ENCODE measurements at regions of chr3 and their contacts with region 1.

Region 1: GRCh38 chr3:32684800-32685542 is at the start of gene CNOT10:
- DNase-seq: peak; percentile 98
- H3K4me3 Mint-ChIP-seq: peak within 1 kb of the TSS; percentile 91
- H3K27ac Mint-ChIP-seq: peak within 1 kb of the TSS; percentile 91
- H3K4me1 Mint-ChIP-seq: peaks cover 33% of the 10 kb centered on the region
- H3K27me3 Mint-ChIP-seq: no peaks in the 10 kb centered on the region
- total RNA-seq, gene CNOT10: 52.4 to 54.7 TPM

Region 2: DNA sequence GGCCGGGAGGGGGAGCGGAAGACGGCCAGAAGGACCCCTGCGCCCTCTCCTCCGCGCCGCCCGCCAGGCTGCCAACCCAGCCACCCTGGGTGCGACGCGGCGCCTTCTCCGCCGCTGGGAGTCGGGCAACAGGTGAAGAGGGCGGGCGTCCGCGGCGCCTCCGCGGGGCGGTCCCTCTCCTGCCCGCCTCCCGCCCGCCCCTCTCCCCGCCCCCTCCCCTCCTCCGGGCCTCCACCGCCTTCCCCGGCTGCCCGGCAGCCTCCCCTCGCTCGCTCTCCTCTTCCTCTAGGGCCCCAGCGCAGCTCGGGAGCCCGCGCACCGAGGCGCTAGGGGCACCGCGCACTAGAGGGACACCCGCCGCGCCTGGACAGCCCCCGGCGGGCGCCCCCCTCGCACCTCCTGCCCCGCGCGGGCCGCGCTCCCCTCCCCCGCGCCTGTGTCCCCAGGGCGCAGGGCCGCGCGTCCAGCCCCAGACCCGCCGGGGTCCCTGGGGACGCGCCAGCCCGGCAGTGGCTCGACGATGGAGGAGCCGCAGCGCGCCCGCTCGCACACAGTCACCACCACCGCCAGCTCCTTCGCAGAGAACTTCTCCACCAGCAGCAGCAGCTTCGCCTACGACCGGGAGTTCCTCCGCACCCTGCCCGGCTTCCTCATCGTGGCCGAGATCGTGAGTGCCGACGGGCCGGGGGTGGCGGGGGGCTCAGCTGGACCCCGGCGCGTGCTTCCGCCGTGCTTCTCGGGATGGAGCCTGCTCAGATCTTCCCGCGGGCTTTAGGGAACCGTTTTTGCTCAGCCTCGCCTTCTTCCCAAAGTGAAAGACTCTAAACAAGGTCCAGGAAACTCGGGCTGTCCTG is 446.3 kb before region 1 on chr3 and contains the start of gene CMTM8:
- CTCF ChIA-PET with region 1: no interaction called
- POLR2A ChIA-PET with region 1: no interaction called
- intact Hi-C with region 1: loop called (anchors 10 kb)
- DNase-seq: peak; percentile 75
- H3K4me3 Mint-ChIP-seq: peak within 1 kb of the TSS; percentile 81
- H3K27ac Mint-ChIP-seq: peak within 1 kb of the TSS; percentile 34
- H3K4me1 Mint-ChIP-seq: peaks cover 31% of the 10 kb centered on the region
- H3K27me3 Mint-ChIP-seq: peaks cover 4% of the 10 kb centered on the region
- total RNA-seq, gene CMTM8: 11.6 to 13.0 TPM

Region 3: DNA sequence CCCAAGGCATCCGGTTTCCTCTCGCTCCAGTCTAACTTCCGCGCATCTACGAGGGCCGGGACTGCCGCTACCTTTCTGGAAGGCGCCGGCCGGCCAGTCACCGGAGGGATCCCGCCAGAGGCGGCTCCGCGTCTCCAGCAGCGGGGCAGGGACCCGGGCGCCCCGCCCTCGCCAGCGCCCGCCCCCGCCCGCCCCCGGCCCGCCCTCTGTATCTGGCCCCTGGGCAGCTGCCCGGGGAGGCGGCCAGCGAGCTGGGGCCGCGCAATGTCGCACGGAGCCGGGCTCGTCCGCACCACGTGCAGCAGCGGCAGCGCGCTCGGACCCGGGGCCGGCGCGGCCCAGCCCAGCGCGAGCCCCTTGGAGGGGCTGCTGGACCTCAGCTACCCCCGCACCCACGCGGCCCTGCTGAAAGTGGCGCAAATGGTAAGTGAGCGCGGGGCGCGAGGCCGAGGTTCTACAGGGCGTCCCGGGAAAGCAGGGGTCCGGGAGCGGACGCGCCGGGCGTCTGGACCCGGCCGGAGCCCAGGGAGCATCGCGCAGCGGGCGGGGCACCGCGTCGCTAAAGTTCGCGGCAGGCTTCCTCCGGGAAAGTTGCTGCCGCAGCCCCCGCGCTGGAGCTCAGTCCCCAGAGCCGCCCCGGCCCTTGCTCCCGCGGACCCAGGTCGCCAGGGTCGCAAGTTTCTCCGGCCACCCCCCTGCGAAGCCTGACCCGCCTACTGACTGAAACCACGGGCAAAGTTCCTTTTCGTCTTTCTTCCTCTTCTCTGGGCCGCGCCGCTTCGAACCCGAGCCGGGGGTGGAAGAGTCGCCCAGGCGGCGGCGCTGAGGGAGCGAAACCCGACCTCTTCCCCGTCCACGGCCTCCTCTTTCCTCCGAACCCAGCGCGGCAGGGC is 293.1 kb before region 1 on chr3 and contains the start of gene CMTM7:
- CTCF ChIA-PET with region 1: no interaction called
- POLR2A ChIA-PET with region 1: no interaction called
- intact Hi-C with region 1: loop called (anchors 10 kb)
- DNase-seq: peak; percentile 81
- H3K4me3 Mint-ChIP-seq: peak within 1 kb of the TSS; percentile 98
- H3K27ac Mint-ChIP-seq: peak within 1 kb of the TSS; percentile 95
- H3K4me1 Mint-ChIP-seq: peaks cover 55% of the 10 kb centered on the region
- H3K27me3 Mint-ChIP-seq: no peaks in the 10 kb centered on the region
- total RNA-seq, gene CMTM7: 46.1 to 47.1 TPM

Region 4: GRCh38 chr3:32570421-32571191 is 114.4 kb before region 1 on chr3 and contains the start of gene DYNC1LI1:
- CTCF ChIA-PET with region 1: no interaction called
- POLR2A ChIA-PET with region 1: interaction called, 3 read pairs
- intact Hi-C with region 1: loop called (anchors 1 kb)
- DNase-seq: peak; percentile 96
- H3K4me3 Mint-ChIP-seq: peak within 1 kb of the TSS; percentile 89
- H3K27ac Mint-ChIP-seq: peak within 1 kb of the TSS; percentile 90
- H3K4me1 Mint-ChIP-seq: peaks cover 27% of the 10 kb centered on the region
- H3K27me3 Mint-ChIP-seq: no peaks in the 10 kb centered on the region
- total RNA-seq, gene DYNC1LI1: 35.2 to 36.3 TPM

Region 5: DNA sequence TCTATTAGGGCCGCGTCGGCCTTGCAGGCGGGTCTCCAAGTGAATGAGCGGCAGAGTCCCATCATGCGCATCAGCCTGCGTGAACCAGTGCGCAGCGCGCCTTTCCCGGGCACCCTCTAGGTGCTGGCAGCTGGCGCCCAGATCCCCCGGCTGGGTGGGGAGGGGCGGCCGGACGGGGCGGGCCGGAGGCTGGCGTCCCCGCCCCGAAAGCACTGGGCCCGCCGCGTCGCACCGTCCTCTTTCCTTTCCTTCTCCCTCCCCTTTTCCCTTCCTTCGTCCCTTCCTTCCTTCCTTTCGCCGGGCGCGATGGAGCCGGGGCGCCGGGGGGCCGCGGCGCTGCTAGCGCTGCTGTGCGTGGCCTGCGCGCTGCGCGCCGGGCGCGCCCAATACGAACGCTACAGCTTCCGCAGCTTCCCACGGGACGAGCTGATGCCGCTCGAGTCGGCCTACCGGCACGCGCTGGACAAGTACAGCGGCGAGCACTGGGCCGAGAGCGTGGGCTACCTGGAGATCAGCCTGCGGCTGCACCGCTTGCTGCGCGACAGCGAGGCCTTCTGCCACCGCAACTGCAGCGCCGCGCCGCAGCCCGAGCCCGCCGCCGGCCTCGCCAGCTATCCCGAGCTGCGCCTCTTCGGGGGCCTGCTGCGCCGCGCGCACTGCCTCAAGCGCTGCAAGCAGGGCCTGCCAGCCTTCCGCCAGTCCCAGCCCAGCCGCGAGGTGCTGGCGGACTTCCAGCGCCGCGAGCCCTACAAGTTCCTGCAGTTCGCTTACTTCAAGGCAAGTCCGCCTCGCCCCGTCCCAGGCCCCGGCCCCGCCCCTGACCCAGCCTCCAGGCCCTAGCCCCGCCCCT is 429.0 kb after region 1 on chr3 and contains the start of gene CRTAP:
- CTCF ChIA-PET with region 1: interaction called, 3 read pairs
- POLR2A ChIA-PET with region 1: no interaction called
- intact Hi-C with region 1: loop called (anchors 10 kb)
- DNase-seq: peak; percentile 91
- H3K4me3 Mint-ChIP-seq: peak within 1 kb of the TSS; percentile 80
- H3K27ac Mint-ChIP-seq: peak within 1 kb of the TSS; percentile 73
- H3K4me1 Mint-ChIP-seq: peaks cover 59% of the 10 kb centered on the region
- H3K27me3 Mint-ChIP-seq: no peaks in the 10 kb centered on the region
- total RNA-seq, gene CRTAP: 57.6 to 60.0 TPM

Region 6: GRCh38 chr3:33798411-33799201 is 1113.6 kb after region 1 on chr3 and contains the start of gene PDCD6IP:
- CTCF ChIA-PET with region 1: no interaction called
- POLR2A ChIA-PET with region 1: no interaction called
- intact Hi-C with region 1: loop called (anchors 10 kb)
- DNase-seq: peak; percentile 94
- H3K4me3 Mint-ChIP-seq: peak within 1 kb of the TSS; percentile 95
- H3K27ac Mint-ChIP-seq: peak within 1 kb of the TSS; percentile 89
- H3K4me1 Mint-ChIP-seq: peaks cover 56% of the 10 kb centered on the region
- H3K27me3 Mint-ChIP-seq: no peaks in the 10 kb centered on the region
- total RNA-seq, gene PDCD6IP: 163 to 168 TPM

Measured in activated CD4-positive, alpha-beta memory T cell treated with anti-CD3 and anti-CD28 coated beads for 36 hours (primary cell).